ENCODE measurements at regions of chr16 and their contacts with region 1.

Region 1: GRCh38 chr16:3029537-3030402 is 5.9 kb downstream of the THOC6 start:
- DNase-seq: no peak
- H3K4me3 ChIP-seq: peak overlapping the region; percentile 25
- CTCF ChIP-seq: no peak

Region 2: DNA sequence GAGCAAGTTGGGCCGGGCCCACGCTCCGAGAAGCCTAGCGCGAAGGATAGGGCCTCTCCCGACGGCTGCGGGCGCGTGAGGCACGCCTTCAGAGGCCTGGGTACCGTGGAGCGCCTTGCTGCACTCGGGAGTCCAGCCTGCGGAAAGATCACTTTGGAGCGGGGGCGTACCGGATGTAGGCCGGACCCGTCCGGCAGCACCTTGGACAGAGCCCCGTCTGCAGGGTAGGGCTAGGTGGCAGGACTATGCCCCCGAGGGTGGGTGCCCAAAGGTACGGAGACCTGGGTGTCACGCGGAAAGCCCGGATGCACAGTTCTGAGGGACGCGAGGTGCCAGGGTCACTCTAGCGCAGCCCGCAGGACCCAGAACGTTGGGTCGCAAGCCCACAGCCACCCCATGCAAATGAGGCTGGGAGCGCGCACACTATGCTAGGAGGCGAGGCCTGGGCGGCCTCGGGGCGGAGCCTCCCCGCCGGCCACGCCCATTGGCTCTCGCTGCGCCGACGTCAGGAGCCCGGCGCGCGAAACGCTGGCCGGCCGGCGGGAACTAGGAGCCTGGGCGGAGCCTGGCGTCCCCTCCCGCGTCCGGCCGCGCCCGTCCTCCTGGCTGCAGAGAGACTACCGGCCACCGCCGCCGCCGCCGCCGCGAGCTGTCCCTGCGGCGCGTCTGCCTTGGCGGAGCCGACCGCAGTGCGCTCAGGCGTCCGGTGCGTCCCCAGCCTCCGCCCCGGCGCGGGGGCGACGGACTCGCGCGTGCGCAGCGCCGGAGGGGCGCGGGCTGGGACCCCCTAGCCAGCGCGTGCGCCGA is 60.8 kb before region 1 on chr16 and contains the start of gene PAQR4:
- CTCF ChIA-PET with region 1: no interaction called
- POLR2A ChIA-PET with region 1: no interaction called
- DNase-seq: no peak
- H3K4me3 ChIP-seq: peak within 1 kb of the TSS; percentile 61
- CTCF ChIP-seq: no peak

Region 3: DNA sequence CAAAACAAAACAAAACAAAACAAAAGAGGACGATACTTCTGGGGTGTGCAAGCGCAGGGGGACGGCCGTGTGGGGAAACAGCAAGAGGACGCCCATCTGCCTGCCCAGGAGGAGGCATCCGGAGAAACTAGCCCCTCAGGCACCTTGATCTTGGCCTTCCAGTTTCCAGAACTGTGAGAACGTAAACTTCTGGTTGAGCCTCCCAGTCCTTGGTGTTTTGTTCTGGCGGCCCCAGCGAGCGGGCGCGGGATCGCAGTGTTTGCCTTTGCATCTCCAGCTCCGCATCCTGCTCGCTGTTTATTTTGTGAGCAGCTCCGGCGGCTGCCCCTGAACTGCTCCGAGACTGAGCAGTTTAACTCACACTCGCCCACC is 15.6 kb after region 1 on chr16:
- CTCF ChIA-PET with region 1: interaction called, 146 read pairs
- POLR2A ChIA-PET with region 1: interaction called, 6 read pairs
- DNase-seq: no peak
- H3K4me3 ChIP-seq: peak overlapping the region; percentile 43
- CTCF ChIP-seq: no peak

Region 4: GRCh38 chr16:3051494-3051893 is 21.7 kb after region 1 on chr16:
- CTCF ChIA-PET with region 1: interaction called, 44 read pairs
- POLR2A ChIA-PET with region 1: interaction called, 3 read pairs
- DNase-seq: no peak
- H3K4me3 ChIP-seq: no peak overlapping the region
- CTCF ChIP-seq: no peak

Region 5: GRCh38 chr16:3161136-3162018 is 131.6 kb after region 1 on chr16:
- CTCF ChIA-PET with region 1: interaction called, 11 read pairs
- POLR2A ChIA-PET with region 1: no interaction called
- DNase-seq: no peak
- H3K4me3 ChIP-seq: no peak overlapping the region
- CTCF ChIP-seq: no peak

Region 6: DNA sequence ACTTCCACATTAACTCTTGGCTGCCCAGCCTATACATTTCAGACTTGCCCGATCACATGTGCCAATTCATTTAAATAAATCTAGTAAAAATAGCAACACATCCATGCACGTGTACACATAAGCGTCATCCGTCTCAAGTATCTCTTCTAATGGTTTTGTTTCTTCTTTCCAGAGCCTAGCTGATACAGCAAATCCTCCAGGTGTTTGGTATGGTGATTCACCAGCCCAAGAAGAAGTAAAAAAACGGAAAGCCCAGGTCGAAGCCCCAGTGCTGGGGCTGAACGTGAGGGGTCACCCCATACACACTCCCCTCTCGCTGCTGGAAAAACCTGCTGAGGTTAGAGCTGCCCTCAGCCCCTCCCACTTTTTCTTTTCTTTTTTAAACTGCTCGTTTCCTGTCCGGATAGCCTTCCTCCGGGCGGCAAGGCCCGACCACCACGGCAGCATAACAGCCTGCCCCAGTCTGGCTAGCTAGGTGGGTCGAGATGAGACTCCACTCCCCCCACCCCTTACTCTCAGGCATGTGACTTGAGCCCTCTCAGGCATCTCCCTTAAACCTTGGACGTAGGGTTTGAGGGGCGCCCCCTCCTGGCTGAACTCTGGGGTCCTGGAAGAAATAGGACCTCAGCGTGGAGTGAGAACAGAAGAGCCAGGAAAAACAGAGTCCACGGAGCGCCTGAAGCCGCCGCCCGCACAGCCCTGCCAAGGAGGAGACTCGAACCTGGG is 144.3 kb after region 1 on chr16:
- CTCF ChIA-PET with region 1: interaction called, 10 read pairs
- POLR2A ChIA-PET with region 1: no interaction called
- DNase-seq: no peak
- H3K4me3 ChIP-seq: peak overlapping the region; percentile 23; the same call in 1 of the 2 replicates
- CTCF ChIP-seq: peak; percentile 37

Region 7: GRCh38 chr16:3274490-3274889 is 244.7 kb after region 1 on chr16:
- CTCF ChIA-PET with region 1: no interaction called
- POLR2A ChIA-PET with region 1: no interaction called
- DNase-seq: no peak
- H3K4me3 ChIP-seq: no peak overlapping the region
- CTCF ChIP-seq: no peak